ENCODE measurements at regions of chr2 and their contacts with region 1.

Region 1: GRCh38 chr2:88691339-88692183 is at the start of gene RPIA:
- DNase-seq: peak; percentile 94 to 99
- ATAC-seq: peak; percentile 93 to 98
- H3K4me3 ChIP-seq: peak within 1 kb of the TSS; percentile 65
- H3K27ac ChIP-seq: peak within 1 kb of the TSS; percentile 91 to 92
- H3K4me1 ChIP-seq: peaks cover 4% of the 10 kb centered on the region; the same call in 2 of the 3 replicates
- CTCF ChIP-seq: peak; percentile 61
- EP300 ChIP-seq: no peak
- POLR2A ChIP-seq: peak; percentile 82
- RAD21 ChIP-seq: peak in 1 of 2 experiments; percentile 22; a peak in 2 of 5 replicates
- polyA plus RNA-seq, gene RPIA: 19.1 and 27.0 TPM in 2 replicates

Region 2: GRCh38 chr2:88469202-88470114 is 222.1 kb before region 1 on chr2:
- CTCF ChIA-PET with region 1: no interaction called
- POLR2A ChIA-PET with region 1: no interaction called
- DNase-seq: no peak
- ATAC-seq: peak; percentile 53 to 65
- H3K4me3 ChIP-seq: no peak overlapping the region
- H3K27ac ChIP-seq: no peak overlapping the region
- H3K4me1 ChIP-seq: no peaks in the 10 kb centered on the region
- CTCF ChIP-seq: no peak
- EP300 ChIP-seq: no peak
- POLR2A ChIP-seq: no peak
- RAD21 ChIP-seq: no peak

Region 3: GRCh38 chr2:88590998-88591613 is 100.5 kb before region 1 on chr2:
- CTCF ChIA-PET with region 1: interaction called, 13 read pairs
- POLR2A ChIA-PET with region 1: no interaction called
- DNase-seq: peak; percentile 61 to 73
- ATAC-seq: peak; percentile 90 to 94
- H3K4me3 ChIP-seq: no peak overlapping the region
- H3K27ac ChIP-seq: no peak overlapping the region
- H3K4me1 ChIP-seq: no peaks in the 10 kb centered on the region
- CTCF ChIP-seq: peak; percentile 95
- EP300 ChIP-seq: no peak
- POLR2A ChIP-seq: no peak
- RAD21 ChIP-seq: peak; percentile 89 to 90

Region 4: DNA sequence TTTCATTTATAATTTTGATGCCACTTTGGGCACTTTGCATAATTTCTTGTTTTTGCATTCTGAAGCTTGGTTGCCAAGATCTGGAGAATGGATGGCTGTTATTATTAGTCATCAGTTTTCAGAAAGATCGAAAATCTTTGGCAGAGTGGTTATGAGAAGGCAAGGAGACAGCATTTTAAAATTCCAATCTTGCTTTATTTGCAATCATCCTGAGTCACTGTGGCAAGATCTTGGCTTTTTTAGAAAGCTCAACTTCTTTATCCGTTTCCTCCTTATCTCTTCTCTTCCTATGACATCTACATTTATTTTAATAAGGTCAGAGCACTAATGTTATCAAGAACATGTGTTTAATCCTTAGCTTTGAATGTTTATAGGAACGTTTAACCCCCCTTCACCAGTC is 33.2 kb before region 1 on chr2:
- CTCF ChIA-PET with region 1: no interaction called
- POLR2A ChIA-PET with region 1: no interaction called
- DNase-seq: no peak
- ATAC-seq: no peak
- H3K4me3 ChIP-seq: no peak overlapping the region
- H3K27ac ChIP-seq: no peak overlapping the region
- H3K4me1 ChIP-seq: peaks cover 23% of the 10 kb centered on the region
- CTCF ChIP-seq: no peak
- EP300 ChIP-seq: no peak
- POLR2A ChIP-seq: no peak
- RAD21 ChIP-seq: no peak

Region 5: DNA sequence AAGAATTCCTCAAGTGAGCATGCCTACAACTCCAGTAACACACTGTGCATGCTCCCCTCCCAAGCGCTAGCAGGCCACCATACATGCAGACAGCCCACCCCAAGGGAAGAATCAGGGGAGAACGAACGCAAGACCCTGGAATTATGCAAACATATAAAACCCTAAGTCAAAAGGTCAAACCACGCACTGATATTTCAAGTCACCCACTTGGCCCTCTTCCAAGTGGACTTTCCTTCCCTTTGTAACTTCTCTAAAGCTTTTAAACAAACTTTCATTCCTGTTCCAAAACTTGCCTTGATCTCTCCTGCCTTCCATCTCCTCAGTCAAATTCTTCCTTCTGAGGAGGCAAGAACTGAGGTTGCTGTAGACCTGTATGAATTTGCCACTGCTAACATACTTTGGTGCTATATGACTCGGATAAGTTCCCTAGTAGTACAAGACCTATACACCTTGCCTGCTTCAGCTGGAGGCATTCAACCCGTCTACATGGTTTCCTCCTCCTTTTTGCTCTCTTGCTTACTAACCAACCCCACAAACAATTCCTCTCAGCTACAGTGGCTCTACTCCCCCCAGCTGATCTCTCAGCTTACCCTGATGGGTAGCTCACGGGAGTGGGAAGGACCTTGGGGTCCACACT is 11.2 kb before region 1 on chr2:
- CTCF ChIA-PET with region 1: interaction called, 12 read pairs
- POLR2A ChIA-PET with region 1: no interaction called
- DNase-seq: no peak
- ATAC-seq: no peak
- H3K4me3 ChIP-seq: no peak overlapping the region
- H3K27ac ChIP-seq: no peak overlapping the region
- H3K4me1 ChIP-seq: no peaks in the 10 kb centered on the region
- CTCF ChIP-seq: no peak
- EP300 ChIP-seq: no peak
- POLR2A ChIP-seq: no peak
- RAD21 ChIP-seq: no peak